Mammary epithelial cell (primary cell): ENCODE measurements at regions of chr12 and their contacts with region 1.

Region 1: DNA sequence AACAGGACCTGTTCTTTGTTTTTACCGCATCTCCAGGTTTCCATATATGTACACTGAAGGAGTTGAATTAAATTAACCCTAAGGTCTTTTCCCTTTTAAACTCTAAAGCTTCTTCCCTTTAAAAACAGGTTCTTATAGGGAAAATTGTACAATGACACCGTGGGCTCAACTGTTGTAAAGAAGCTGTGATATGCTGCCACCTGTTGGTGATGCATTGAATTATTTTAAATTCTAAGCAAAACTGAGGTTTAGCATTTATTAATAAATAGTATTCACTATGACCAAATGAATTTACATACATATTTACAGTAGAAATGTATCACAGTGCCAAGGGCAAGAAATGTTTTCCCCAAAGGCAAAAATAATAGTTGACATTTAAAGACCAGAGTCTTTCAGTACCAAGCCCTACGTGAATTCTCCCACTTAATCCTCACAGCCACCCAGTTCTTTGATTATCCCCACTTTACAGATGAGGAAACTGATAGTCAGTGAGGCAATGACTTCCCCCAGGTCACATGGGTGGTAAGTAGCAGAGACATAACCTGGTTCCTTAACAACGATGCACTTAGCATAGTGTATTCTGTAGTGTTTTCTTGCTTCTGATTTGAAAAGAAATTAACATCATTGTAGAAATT is 35.7 kb upstream of the TMEM263 start:
- DNase-seq: no peak
- H3K4me3 ChIP-seq: no peak overlapping the region
- H3K27ac ChIP-seq: no peak overlapping the region
- H3K4me1 ChIP-seq: no peaks in the 10 kb centered on the region
- H3K27me3 ChIP-seq: no peaks in the 10 kb centered on the region
- CTCF ChIP-seq: peak; percentile 64 to 69

Region 2: DNA sequence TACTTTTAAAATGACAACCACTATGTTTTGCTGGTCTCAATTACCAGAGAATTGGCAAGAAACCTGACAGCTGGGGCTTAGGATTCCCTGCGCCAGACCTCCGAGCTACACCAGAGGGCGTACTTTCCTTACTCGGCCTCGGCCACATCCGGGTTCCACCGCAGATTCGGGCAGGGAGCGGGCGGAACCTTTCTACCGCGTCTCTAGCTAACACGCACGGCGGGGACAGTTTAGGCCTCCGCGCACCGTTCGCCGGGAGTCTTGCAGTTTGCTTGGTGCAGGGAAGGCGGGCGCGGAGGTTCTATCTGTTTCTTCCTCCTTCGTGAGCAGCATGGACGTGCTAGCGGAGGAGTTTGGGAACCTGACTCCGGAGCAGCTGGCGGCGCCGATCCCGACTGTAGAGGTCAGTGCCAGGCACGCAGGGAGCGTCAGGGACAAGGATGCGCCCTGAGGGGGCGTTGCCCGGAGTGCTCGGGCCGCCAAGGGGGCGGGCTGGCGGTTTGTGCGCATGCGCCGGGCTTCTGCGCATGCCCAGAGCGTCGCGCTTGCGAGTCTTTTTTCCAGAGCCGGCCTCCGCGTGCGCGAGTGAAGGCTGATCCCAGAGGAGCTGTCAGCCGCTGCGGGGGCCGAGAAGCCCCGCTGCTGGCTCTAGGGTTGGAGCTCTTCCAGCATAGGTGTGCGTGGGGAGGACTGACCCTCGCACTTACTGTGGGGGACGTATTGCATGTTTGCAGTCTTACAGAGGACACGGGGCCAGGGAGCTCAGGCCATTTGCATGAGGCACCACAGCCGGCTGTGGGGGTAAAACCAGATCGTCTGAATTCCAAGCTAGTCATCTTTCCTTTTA is 562.3 kb before region 1 on chr12 and contains the start of gene POLR3B:
- CTCF ChIA-PET with region 1: no interaction called
- dilution Hi-C with region 1: no loop called
- in situ Hi-C with region 1: no loop called
- intact Hi-C with region 1: loop called (anchors 1 kb)
- DNase-seq: peak; percentile 93
- H3K4me3 ChIP-seq: peak within 1 kb of the TSS; percentile 75 to 90 (median 81)
- H3K27ac ChIP-seq: peak within 1 kb of the TSS; percentile 69
- H3K4me1 ChIP-seq: peaks cover 10% of the 10 kb centered on the region
- H3K27me3 ChIP-seq: no peaks in the 10 kb centered on the region
- CTCF ChIP-seq: peak; percentile 81 to 92
- total RNA-seq, gene POLR3B: 13.3 TPM

Region 3: GRCh38 chr12:106682592-106683234 is 237.3 kb before region 1 on chr12:
- CTCF ChIA-PET with region 1: no interaction called
- dilution Hi-C with region 1: no loop called
- in situ Hi-C with region 1: no loop called
- intact Hi-C with region 1: loop called (anchors 2 kb)
- DNase-seq: peak; percentile 10
- H3K4me3 ChIP-seq: no peak overlapping the region
- H3K27ac ChIP-seq: no peak overlapping the region
- H3K4me1 ChIP-seq: no peaks in the 10 kb centered on the region
- H3K27me3 ChIP-seq: no peaks in the 10 kb centered on the region
- CTCF ChIP-seq: peak; percentile 30

Region 4: DNA sequence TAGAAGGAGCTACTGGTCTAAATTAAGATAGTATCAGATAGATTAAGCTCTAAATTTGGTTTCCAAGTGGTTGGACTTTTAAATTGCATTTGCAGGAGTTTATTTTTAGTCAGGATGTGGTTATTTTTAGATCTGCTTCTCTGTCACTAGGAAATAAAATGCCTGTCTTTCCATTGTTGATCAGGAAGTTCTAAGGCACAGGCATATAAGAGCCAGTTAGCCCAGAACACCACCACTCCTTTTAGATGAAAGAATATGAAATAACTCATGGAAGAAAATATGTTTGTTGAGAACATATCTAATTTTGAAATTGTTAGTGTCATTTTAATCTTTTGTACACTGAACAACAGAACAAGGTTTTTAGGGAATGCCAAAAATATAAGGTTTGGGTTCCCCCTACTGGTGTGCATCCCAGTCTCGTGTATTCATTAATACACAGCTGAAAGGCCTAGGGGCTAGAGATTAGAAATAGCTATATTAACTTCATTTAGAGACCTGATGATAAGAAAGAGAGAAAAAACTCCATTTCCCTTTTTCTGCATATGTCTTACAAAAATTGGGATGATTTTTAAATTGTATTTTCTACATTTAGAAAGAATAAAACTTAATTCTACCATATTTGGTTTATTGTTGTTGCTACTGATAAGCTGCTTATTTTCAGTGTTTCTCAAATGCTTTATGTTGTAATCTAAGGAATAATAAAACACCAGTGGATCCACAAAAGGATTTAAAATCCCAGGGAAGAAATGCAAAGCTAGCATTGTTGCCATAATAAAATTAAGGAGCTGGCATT is 78.3 kb before region 1 on chr12:
- CTCF ChIA-PET with region 1: interaction called, 6 read pairs
- dilution Hi-C with region 1: no loop called
- in situ Hi-C with region 1: no loop called
- intact Hi-C with region 1: loop called (anchors 10 kb)
- DNase-seq: peak; percentile 17
- H3K4me3 ChIP-seq: no peak overlapping the region
- H3K27ac ChIP-seq: no peak overlapping the region
- H3K4me1 ChIP-seq: no peaks in the 10 kb centered on the region
- H3K27me3 ChIP-seq: no peaks in the 10 kb centered on the region
- CTCF ChIP-seq: peak; percentile 50 to 60

Region 5: GRCh38 chr12:107007411-107007810 is 87.4 kb after region 1 on chr12:
- CTCF ChIA-PET with region 1: no interaction called
- dilution Hi-C with region 1: no loop called
- in situ Hi-C with region 1: no loop called
- intact Hi-C with region 1: no loop called
- DNase-seq: no peak
- H3K4me3 ChIP-seq: no peak overlapping the region
- H3K27ac ChIP-seq: no peak overlapping the region
- H3K4me1 ChIP-seq: no peaks in the 10 kb centered on the region
- H3K27me3 ChIP-seq: no peaks in the 10 kb centered on the region
- CTCF ChIP-seq: no peak

Region 6: DNA sequence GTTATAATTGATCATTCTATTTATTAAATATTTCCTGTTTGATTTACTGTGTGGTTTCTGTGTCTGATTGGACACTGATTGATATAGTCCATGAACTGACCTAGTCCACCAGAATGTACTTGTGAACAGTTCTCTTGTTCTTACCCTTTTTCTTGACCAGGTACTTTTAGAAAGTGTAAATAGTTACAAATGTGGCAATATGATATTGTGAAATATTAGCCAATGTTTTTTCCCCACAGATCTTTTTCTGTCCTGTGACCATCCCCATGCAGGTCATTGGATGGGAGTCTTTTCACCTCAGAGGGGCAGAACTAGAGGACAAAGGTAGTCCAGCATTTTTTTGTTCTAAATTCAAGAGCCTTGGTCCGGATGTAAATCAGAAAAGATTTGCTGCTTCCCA is 181.6 kb after region 1 on chr12:
- CTCF ChIA-PET with region 1: no interaction called
- dilution Hi-C with region 1: no loop called
- in situ Hi-C with region 1: no loop called
- intact Hi-C with region 1: loop called (anchors 5 kb)
- DNase-seq: no peak
- H3K4me3 ChIP-seq: no peak overlapping the region
- H3K27ac ChIP-seq: no peak overlapping the region
- H3K4me1 ChIP-seq: no peaks in the 10 kb centered on the region
- H3K27me3 ChIP-seq: no peaks in the 10 kb centered on the region
- CTCF ChIP-seq: no peak